Heart right ventricle (tissue), 16 donors: ENCODE measurements at regions of chr4 and their contacts with region 1.

Region 1: DNA sequence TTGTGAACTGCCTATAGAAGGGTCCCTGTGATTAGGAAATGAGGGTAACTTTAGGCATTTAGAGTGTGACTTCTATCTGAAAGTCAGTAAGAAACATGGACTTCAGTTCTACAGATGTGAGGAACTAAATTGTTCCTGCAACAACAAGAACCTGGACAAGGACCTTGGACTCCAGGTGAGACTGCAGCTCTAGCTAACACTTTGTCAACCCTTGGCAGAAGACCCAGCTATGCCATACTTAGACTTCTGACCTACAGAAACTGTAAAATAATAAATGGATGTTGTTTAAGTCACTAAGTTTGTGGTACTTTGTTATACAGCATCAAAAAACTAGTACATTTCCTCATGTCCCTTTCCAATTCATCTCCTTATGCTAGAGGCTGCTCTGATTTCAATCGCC is 580.8 kb downstream of the IQCM start:
- DNase-seq: no peak
- ATAC-seq: no peak
- H3K4me3 ChIP-seq: no peak overlapping the region
- H3K27ac ChIP-seq: no peak overlapping the region
- H3K4me1 ChIP-seq: no peaks in the 10 kb centered on the region
- H3K27me3 ChIP-seq: no peaks in the 10 kb centered on the region
- CTCF ChIP-seq: no peak

Region 2: GRCh38 chr4:150533673-150534072 is 1298.9 kb after region 1 on chr4:
- intact Hi-C with region 1: loop called in 1 of 10 experiments (anchors 5 kb)
- DNase-seq: no peak
- ATAC-seq: no peak
- H3K4me3 ChIP-seq: no peak overlapping the region
- H3K27ac ChIP-seq: no peak overlapping the region
- H3K4me1 ChIP-seq: no peaks in the 10 kb centered on the region
- H3K27me3 ChIP-seq: no peaks in the 10 kb centered on the region
- CTCF ChIP-seq: no peak